ENCODE measurements at regions of chr6 and their contacts with region 1.

Region 1: DNA sequence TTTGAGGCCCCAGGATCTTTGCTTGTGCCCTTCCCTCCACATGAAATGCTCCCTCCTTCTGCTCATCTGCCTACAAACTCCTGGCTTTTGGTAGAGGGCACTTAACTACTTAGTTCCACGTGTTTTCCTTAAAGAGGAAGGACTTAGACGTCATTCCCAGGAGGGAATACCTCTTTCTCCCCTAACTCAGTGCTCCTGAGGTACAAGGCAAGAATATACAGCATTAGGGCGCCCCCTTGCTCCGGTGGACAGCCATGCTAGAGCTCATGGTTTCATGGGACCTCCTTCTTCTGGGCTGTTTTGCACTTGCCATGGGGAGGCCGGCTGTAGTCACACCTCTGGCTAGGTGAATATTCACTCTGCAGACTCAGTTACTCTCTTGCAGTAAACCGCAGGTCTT is 93.8 kb upstream of the LY86 start:
- DNase-seq: peak; percentile 28 to 67 (median 50)
- ATAC-seq: peak; percentile 99
- H3K4me3 ChIP-seq: no peak overlapping the region
- H3K27ac ChIP-seq: no peak overlapping the region
- H3K4me1 ChIP-seq: no peaks in the 10 kb centered on the region
- H3K27me3 ChIP-seq: peaks cover 0 to 12% of the 10 kb centered on the region in 2 experiments; a peak in 1 of 5 replicates
- CTCF ChIP-seq: peak; percentile 73 to 80 (median 78)
- EP300 ChIP-seq: no peak
- POLR2A ChIP-seq: no peak
- RAD21 ChIP-seq: peak; percentile 54 to 81

Region 2: DNA sequence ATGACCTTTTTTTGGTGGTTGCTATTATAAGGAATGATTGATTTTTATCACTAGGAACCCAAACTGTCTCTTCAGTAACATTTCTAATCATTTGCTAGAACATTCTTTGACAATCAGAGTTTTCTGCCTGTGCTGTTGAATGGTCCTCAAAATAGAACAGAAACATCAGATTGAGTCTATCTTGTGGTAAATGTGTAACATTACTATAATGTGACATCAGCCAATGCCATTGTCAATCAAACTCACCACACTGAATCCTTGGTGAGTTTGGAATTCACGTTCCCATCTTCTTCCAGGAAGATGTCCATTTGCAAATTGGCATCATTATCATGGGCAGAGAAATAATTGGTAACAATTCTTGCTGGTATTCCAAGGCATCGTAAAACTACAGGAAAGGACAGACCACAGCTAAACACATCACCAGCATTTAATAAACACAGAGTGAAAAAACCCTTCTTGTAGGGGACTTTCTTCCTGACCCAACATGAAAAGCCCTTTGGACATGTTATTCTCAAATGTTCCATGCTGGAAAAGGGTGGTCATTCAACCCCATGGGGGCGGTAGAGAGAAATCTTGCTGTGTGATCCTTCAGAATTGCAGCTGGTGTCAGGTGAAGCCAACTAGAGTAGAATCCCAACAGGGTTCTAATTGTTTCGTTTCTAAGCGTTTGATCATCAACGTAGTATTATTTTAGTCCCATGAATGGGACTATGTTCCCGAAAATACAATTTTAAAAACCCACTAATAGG is 272.7 kb before region 1 on chr6:
- CTCF ChIA-PET with region 1: no interaction called
- POLR2A ChIA-PET with region 1: no interaction called
- in situ Hi-C with region 1: no loop called
- intact Hi-C with region 1: loop called (anchors 10 kb)
- DNase-seq: peak; percentile 46 to 60 (median 52)
- ATAC-seq: peak; percentile 80
- H3K4me3 ChIP-seq: no peak overlapping the region
- H3K27ac ChIP-seq: no peak overlapping the region
- H3K4me1 ChIP-seq: no peaks in the 10 kb centered on the region; a peak in 1 of 5 replicates
- H3K27me3 ChIP-seq: no peaks in the 10 kb centered on the region; a peak in 1 of 5 replicates
- CTCF ChIP-seq: peak; percentile 60 to 62 (median 60)
- EP300 ChIP-seq: no peak
- POLR2A ChIP-seq: no peak
- RAD21 ChIP-seq: 0 out of 4 replicates have a peak, but pooled peaks of 1 of the 2 experiments have one; percentile 32